BJ (cell line): ENCODE measurements at regions of chr12 and their contacts with region 1.

Region 1: GRCh38 chr12:14928969-14929368 is 9.4 kb downstream of the ERP27 start:
- DNase-seq: no peak
- H3K4me3 ChIP-seq: peak overlapping the region; percentile 9
- H3K27me3 ChIP-seq: no peaks in the 10 kb centered on the region
- CTCF ChIP-seq: no peak

Region 2: GRCh38 chr12:14643251-14643650 is 285.7 kb before region 1 on chr12:
- CTCF ChIA-PET with region 1: no interaction called
- POLR2A ChIA-PET with region 1: no interaction called
- DNase-seq: no peak
- H3K4me3 ChIP-seq: no peak overlapping the region
- H3K27me3 ChIP-seq: no peaks in the 10 kb centered on the region
- CTCF ChIP-seq: no peak

Region 3: GRCh38 chr12:14769969-14770495 is 158.9 kb before region 1 on chr12:
- CTCF ChIA-PET with region 1: no interaction called
- POLR2A ChIA-PET with region 1: interaction called, 12 read pairs
- DNase-seq: no peak
- H3K4me3 ChIP-seq: peak overlapping the region; percentile 75
- H3K27me3 ChIP-seq: no peaks in the 10 kb centered on the region
- CTCF ChIP-seq: peak; percentile 86

Region 4: DNA sequence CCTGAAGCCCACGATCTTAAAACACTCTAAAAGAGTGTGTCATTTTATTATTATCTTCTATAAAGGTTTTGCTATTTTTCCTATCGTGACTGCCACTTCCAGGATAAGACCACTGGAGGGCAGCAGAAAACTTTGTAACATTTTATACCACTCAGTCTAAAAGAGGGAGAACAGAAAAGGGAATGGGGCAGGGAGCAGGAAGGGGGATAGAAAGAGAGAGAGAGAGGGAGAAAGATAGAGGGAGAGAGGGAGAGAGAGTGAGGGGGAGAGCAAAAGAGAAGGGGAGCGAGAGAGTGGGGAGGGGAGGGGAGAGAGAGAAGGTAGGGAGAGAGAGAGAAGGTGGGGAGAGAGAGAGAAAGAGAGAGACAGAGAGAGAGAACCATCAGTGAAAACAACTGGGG is 83.6 kb before region 1 on chr12:
- CTCF ChIA-PET with region 1: interaction called, 11 read pairs
- POLR2A ChIA-PET with region 1: no interaction called
- DNase-seq: no peak
- H3K4me3 ChIP-seq: no peak overlapping the region
- H3K27me3 ChIP-seq: no peaks in the 10 kb centered on the region
- CTCF ChIP-seq: peak; percentile 77

Region 5: DNA sequence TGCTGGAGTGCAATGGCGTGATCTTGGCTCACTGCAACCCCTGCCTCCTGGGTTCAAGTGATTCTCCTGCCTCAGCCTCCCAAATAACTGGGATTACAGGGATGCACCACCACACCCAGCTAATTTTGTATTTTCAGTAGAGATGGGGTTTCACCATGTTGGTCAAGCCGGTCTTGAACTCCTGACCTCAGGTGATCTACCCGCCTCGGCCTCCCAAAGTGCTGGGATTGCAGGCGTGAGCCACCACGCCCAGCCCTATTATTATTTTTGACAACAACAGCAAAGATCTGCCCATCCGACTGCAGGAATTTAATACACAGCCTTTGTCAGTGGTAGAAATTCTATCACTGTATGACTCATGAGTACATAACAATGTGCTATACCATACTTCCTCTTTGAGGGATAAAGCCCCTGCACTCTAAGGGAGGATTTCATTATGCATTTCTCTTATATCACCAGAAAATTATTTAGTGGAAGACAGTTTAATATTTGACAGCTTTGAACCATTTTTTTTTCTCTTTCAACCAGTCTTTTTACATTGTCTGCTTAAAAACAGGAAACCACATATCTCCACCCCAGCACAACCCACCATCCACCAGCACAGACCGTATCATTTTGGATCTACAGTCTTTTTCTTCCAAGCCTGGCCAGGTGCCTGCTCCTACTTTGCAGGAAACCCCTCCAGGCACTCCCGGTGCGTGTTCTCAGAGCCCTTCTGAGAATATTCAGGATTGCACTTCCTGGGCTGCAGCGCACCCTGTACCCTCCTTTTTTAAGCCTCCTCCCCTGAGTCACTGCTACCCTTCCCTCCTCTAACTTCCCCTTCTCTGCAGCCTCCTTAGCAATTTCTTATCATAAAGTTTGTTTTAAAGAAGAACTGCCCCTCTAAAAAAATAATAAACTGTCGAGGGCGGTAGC is 31.8 kb after region 1 on chr12:
- CTCF ChIA-PET with region 1: no interaction called
- POLR2A ChIA-PET with region 1: no interaction called
- DNase-seq: no peak
- H3K4me3 ChIP-seq: 0 out of 2 replicates have a peak overlapping the region, but pooled peaks have one; percentile 10
- H3K27me3 ChIP-seq: no peaks in the 10 kb centered on the region
- CTCF ChIP-seq: no peak

Region 6: DNA sequence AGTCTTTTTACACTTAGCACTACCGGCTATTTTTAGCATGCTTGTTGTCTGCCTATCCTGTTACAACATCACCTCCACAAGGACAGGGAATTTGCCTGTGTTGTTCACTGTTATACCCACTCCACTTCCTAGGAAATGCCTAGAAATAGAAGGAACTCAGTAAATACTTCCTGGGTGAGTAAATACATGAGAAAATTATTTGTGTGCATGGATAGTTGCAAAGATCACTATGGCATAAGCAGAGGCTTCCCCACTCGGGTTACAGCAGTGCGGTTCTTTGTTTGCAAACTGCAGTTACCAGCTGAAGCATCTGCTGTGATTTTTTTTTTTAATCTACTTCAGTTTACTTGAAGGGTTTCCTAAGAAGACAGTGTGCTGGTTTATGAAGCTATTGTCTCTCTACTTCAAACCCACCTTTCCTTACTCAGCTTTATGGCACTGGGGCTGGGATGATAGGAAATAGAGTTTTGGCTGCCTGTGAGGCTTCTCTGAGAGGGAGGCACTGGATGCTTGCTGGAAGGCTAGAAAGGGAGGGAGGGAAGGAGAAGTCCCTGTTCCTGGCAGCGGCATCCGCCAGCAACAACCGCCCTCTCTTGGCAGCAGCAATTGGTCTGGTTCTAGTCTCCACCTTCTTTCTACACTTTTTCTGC is 72.9 kb after region 1 on chr12:
- CTCF ChIA-PET with region 1: no interaction called
- POLR2A ChIA-PET with region 1: no interaction called
- DNase-seq: no peak
- H3K4me3 ChIP-seq: no peak overlapping the region
- H3K27me3 ChIP-seq: peaks cover 9% of the 10 kb centered on the region
- CTCF ChIP-seq: no peak